Naive thymus-derived CD4-positive, alpha-beta T cell (primary cell): ENCODE measurements at regions of chr19 and their contacts with region 1.

Region 1: DNA sequence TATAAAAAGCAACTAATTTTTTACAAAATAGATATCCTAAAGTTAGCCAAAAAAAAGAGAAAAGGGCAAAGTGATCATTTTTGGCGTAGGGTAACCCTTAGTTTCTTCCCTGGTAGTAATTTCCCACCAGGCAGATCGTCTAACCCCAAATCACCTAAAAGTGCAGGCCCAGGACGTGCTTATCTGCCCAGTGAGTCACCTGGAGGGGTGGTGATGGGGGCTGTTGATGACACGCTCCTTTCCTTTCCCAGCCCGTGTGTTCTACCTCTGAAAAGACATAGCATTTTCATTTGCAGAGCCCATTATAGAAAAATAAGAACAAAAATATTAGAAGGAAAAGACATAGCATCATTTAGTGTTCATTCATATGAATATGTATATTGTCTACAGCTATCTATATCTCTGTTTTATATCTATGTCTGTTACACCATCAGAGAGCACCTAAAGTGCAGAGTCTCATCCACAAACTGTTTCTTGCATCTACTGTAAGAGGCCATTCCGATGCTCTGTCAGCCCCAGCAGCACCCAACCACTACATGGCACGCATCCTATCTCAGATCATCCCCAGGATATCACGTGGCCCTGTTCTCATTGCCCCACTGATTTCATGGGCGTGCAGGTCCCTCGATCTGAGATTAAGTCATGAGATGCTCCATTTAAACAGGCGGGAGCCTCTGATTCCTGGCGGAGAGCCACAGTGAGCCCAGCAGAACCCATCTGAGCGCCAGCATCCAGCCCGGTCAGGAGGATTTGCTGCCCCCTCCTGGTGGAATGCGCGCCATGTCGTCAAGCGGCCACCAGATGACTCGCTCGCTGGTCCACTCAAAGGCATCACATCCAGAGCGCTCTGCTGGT is 8.5 kb upstream of the LILRB3 start:
- DNase-seq: peak; percentile 48 to 89 (median 70)
- ATAC-seq: peak; percentile 85
- H3K4me3 ChIP-seq: no peak overlapping the region
- H3K4me3 Mint-ChIP-seq: no peak overlapping the region
- H3K27ac ChIP-seq: no peak overlapping the region
- H3K27ac Mint-ChIP-seq: peak overlapping the region in 1 of 9 donors; percentile 26
- H3K4me1 ChIP-seq: peaks cover 0 to 3% of the 10 kb centered on the region in 2 donors
- H3K4me1 Mint-ChIP-seq: peaks cover 0 to 14% (median 5%) of the 10 kb centered on the region in 7 donors
- H3K27me3 ChIP-seq: no peaks in the 10 kb centered on the region
- H3K27me3 Mint-ChIP-seq: peaks cover 0 to 52% (median 35%) of the 10 kb centered on the region in 5 donors

Region 2: DNA sequence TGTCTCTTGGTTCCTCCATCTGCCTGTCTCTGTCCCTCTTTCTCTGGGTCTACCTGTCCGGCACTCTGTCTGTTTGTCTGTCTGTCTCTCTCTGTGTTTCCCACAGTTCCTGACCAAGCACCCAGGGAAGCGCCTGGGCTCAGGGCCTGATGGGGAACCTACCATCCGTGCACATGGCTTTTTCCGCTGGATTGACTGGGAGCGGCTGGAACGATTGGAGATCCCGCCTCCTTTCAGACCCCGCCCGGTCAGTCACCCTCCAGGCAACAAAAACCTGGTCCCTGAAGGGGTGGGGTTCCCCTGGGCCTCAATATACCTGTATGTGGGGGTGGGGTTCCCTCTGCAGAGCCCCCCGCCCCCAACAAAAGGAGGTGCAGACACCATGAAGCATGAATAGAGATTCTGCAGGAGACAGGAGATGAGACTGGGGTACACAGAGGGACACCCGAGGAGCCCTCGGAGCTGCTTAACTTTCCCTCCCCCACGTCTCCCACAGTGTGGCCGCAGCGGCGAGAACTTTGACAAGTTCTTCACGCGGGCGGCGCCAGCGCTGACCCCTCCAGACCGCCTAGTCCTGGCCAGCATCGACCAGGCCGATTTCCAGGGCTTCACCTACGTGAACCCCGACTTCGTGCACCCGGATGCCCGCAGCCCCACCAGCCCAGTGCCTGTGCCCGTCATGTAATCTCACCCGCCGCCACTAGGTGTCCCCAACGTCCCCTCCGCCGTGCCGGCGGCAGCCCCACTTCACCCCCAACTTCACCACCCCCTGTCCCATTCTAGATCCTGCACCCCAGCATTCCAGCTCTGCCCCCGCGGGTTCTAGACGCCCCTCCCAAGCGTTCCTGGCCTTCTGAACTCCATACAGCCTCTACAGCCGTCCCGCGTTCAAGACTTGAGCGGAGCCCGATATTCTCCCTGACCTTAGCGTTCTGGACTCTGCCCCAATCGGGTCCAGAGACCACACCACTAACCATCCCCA is 324.8 kb before region 1 on chr19:
- CTCF ChIA-PET with region 1: no interaction called
- POLR2A ChIA-PET with region 1: no interaction called
- intact Hi-C with region 1: loop called in 1 of 2 experiments (anchors 5 kb)
- DNase-seq: peak; percentile 33 to 78 (median 55)
- ATAC-seq: peak; percentile 80
- H3K4me3 ChIP-seq: no peak overlapping the region
- H3K4me3 Mint-ChIP-seq: peak overlapping the region in 6 of 10 donors; percentile 26 to 87 (median 63)
- H3K27ac ChIP-seq: no peak overlapping the region
- H3K27ac Mint-ChIP-seq: peak overlapping the region in 1 of 9 donors; percentile 10
- H3K4me1 ChIP-seq: peaks cover 5 to 13% of the 10 kb centered on the region in 2 donors
- H3K4me1 Mint-ChIP-seq: peaks cover 21 to 34% (median 28%) of the 10 kb centered on the region in 7 donors
- H3K27me3 ChIP-seq: peaks cover 3 to 34% of the 10 kb centered on the region in 2 donors
- H3K27me3 Mint-ChIP-seq: peaks cover 60 to 91% (median 78%) of the 10 kb centered on the region in 5 donors

Region 3: GRCh38 chr19:54168174-54168917 is 63.0 kb before region 1 on chr19:
- CTCF ChIA-PET with region 1: interaction called, 12 read pairs
- POLR2A ChIA-PET with region 1: no interaction called
- intact Hi-C with region 1: loop called (anchors 1 kb)
- DNase-seq: peak; percentile 66 to 94 (median 82)
- ATAC-seq: peak; percentile 89
- H3K4me3 ChIP-seq: no peak overlapping the region
- H3K4me3 Mint-ChIP-seq: peak overlapping the region in 2 of 10 donors; percentile 8 to 28
- H3K27ac ChIP-seq: no peak overlapping the region
- H3K27ac Mint-ChIP-seq: no peak overlapping the region
- H3K4me1 ChIP-seq: peaks cover 4 to 12% of the 10 kb centered on the region in 2 donors
- H3K4me1 Mint-ChIP-seq: peaks cover 10 to 25% (median 17%) of the 10 kb centered on the region in 7 donors
- H3K27me3 ChIP-seq: no peaks in the 10 kb centered on the region
- H3K27me3 Mint-ChIP-seq: no peaks in the 10 kb centered on the region

Region 4: DNA sequence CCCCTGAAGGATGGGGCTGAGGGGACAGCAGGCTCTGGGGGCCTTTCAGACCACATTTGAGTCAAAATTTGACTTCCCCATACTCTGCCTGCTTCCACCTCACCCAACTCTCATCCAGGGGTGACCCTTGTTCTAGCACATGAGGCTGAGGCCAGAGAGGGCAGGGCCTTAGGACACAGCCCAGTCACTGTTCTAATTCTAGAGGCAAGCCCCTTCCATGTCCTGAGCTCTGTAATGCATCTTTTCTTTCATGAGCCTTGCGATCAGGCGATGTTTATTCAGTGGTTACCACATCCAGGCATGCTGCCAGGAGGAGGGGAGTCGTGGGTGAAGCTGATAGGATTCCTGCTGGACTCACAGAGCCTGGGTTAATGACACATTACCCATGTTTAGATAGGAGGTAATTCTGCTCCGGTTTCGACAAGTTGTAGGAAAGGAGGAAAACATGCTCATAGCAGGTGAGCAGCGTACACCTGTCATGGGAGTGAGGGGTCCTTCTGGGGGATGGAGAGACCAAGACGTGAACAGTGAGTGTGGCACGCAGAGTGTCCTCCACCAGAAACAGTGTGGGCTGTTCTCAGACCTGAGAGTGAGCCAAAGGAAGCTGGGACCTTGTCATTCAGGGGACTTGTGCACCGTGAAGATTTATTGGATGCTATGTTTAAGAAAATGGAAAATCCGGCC is 21.4 kb before region 1 on chr19:
- CTCF ChIA-PET with region 1: interaction called, 4 read pairs
- POLR2A ChIA-PET with region 1: no interaction called
- intact Hi-C with region 1: loop called in 1 of 2 experiments (anchors 2 kb)
- DNase-seq: no peak
- ATAC-seq: peak; percentile 46
- H3K4me3 ChIP-seq: no peak overlapping the region
- H3K4me3 Mint-ChIP-seq: peak overlapping the region; percentile 10 to 78 (median 56)
- H3K27ac ChIP-seq: peak overlapping the region; percentile 1
- H3K27ac Mint-ChIP-seq: peak overlapping the region in 8 of 9 donors; percentile 3 to 82 (median 72)
- H3K4me1 ChIP-seq: peaks cover 47 to 48% of the 10 kb centered on the region in 2 donors
- H3K4me1 Mint-ChIP-seq: peaks cover 37 to 65% (median 61%) of the 10 kb centered on the region in 7 donors
- H3K27me3 ChIP-seq: no peaks in the 10 kb centered on the region
- H3K27me3 Mint-ChIP-seq: no peaks in the 10 kb centered on the region